ENCODE measurements at regions of chr10 and their contacts with region 1.

Region 1: DNA sequence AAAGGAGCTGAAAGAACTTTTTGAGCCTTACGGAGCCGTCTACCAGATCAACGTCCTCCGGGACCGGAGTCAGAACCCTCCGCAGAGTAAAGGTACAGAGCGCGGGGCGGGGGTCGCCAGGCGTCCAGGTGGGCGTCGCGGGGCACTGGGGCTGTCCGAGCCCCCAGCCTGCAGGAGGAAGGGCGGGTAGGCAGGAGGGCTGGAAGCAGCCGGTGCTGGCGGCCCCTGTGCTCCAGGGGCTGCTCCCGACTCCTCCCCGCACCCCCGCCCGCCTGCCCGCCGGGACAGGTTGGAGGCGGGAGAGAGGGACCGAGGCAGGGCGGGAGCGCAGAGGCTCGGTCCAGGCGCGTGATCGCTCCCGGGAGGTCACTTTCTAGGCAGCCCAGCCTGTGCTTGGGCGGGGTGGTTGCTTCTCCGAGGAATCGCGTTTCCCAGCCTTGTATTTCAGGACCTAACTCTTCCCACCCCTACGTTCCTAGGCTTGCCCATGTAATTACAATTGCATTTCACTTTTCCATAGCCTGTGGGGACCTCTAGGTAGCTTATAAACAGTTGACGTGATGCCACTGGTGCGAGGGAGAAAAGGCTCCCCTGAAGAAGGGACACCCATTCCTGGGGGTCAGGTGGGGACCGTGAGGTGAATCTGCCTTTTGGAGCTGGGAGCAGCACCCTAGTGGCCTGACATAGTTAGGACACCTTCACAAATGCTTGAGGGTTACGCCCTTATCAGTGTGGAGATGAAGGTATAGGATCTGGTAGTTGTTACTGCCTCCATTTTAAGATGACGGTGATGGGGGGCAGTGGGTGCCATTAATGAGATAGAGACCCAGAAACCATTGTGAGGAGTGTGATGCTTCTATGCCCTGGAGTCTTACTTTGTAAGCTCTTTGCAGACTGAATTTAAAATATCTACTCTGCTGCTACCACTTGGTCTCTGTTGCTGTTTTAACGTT is 148.2 kb downstream of the CELF2 start:
- DNase-seq: peak; percentile 70
- H3K4me3 Mint-ChIP-seq: no peak overlapping the region
- H3K27ac Mint-ChIP-seq: peak overlapping the region; percentile 98
- H3K4me1 Mint-ChIP-seq: peaks cover 35% of the 10 kb centered on the region
- H3K27me3 Mint-ChIP-seq: no peaks in the 10 kb centered on the region

Region 2: DNA sequence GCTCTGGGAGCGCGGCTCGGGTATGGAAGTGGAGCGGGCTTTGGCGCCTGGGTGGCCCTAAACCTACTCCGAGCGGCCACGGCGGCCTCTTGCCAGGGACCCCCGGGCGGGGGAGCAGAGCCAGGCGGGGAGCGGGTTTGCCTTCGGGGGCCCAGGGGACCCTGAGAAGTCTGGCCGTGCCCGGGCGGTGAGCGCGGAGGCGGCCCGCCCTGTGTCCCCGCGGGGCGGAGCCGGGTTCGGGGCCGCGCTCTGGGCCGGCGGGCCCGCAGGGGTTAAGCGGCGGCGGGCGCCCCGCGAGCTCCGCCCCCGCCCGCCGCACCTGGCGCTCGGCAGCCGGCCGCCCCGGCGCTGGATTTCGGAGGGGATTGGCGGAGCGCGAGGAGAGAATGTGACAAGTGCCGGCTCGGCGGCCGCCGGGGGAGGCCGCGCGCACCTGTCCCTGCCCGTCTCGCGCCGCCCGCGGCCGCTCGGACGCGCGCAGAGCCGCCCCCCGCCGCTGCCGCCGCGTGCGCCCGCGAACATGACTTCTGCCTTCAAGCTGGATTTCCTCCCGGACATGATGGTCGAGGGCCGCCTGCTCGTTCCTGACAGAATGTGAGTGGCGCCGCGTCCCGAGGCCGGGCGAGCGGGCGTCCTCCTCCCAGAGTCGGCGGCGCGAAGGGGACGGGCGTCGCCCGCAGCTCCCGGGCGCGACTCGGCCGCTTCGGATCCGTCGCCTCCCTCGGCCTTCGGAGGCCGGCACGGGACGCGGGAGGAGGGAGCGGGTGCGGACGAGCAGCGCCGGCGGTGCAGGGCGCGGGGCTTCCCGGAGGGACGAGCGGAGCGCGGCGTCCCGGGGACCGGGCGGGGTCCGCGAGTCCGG is 148.1 kb before region 1 on chr10 and contains the start of gene CELF2:
- intact Hi-C with region 1: loop called (anchors 5 kb)
- DNase-seq: peak; percentile 37
- H3K4me3 Mint-ChIP-seq: peak within 1 kb of the TSS; percentile 71
- H3K27ac Mint-ChIP-seq: peak within 1 kb of the TSS; percentile 6
- H3K4me1 Mint-ChIP-seq: peaks cover 20% of the 10 kb centered on the region
- H3K27me3 Mint-ChIP-seq: peaks cover 83% of the 10 kb centered on the region
- total RNA-seq, gene CELF2: 110 and 111 TPM in 2 replicates

Region 3: DNA sequence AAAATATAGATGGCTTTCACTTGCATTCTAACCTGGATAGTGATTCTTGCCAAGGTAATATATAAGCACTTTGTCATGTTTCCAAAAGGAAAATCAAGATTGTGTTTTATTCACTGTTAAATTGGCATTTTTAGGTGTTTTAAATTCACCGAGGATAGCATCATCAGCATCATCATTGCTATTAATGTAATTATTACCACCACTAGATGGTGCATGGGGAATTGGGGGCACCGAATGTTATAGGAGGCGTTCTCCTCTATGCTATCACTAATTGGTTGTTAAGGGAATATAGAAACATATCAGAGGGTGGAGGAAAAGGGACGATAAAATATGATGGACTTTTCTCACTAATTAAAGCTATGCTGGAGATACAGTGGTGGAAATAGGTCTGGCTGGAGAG is 52.7 kb before region 1 on chr10:
- intact Hi-C with region 1: loop called (anchors 1 kb)
- DNase-seq: no peak
- H3K4me3 Mint-ChIP-seq: no peak overlapping the region
- H3K27ac Mint-ChIP-seq: no peak overlapping the region
- H3K4me1 Mint-ChIP-seq: peaks cover 12% of the 10 kb centered on the region
- H3K27me3 Mint-ChIP-seq: peaks cover 4% of the 10 kb centered on the region

Region 4: GRCh38 chr10:11145495-11145855 is 20.4 kb before region 1 on chr10:
- intact Hi-C with region 1: loop called (anchors 1 kb)
- DNase-seq: peak; percentile 61
- H3K4me3 Mint-ChIP-seq: peak overlapping the region; percentile 82
- H3K27ac Mint-ChIP-seq: peak overlapping the region; percentile 98
- H3K4me1 Mint-ChIP-seq: peaks cover 92% of the 10 kb centered on the region
- H3K27me3 Mint-ChIP-seq: no peaks in the 10 kb centered on the region

Region 5: DNA sequence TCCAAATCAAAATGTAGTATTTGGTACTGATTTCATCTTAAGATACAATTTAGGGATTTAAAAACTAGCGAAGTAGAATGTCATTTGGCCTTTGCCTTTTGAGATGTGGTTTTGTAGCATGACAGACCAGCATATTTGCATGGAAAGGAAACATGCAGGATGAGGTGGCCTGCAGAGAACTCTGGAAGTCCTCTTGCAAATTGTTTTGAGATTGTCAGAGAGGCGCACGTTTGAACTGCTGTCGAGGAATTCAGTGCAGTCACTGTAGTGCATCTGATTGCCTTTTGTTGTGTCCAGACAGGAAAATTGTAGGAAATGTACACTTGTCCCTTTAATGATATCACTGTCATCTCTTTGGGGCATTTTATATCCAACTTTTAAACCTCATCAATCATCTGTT is 11.5 kb before region 1 on chr10:
- intact Hi-C with region 1: loop called (anchors 1 kb)
- DNase-seq: no peak
- H3K4me3 Mint-ChIP-seq: peak overlapping the region; percentile 22
- H3K27ac Mint-ChIP-seq: no peak overlapping the region
- H3K4me1 Mint-ChIP-seq: peaks cover 89% of the 10 kb centered on the region
- H3K27me3 Mint-ChIP-seq: peaks cover 1% of the 10 kb centered on the region

Region 6: GRCh38 chr10:11178606-11179515 is 13.0 kb after region 1 on chr10:
- intact Hi-C with region 1: loop called (anchors 1 kb)
- DNase-seq: peak; percentile 88
- H3K4me3 Mint-ChIP-seq: no peak overlapping the region
- H3K27ac Mint-ChIP-seq: no peak overlapping the region
- H3K4me1 Mint-ChIP-seq: peaks cover 30% of the 10 kb centered on the region
- H3K27me3 Mint-ChIP-seq: no peaks in the 10 kb centered on the region

Region 7: DNA sequence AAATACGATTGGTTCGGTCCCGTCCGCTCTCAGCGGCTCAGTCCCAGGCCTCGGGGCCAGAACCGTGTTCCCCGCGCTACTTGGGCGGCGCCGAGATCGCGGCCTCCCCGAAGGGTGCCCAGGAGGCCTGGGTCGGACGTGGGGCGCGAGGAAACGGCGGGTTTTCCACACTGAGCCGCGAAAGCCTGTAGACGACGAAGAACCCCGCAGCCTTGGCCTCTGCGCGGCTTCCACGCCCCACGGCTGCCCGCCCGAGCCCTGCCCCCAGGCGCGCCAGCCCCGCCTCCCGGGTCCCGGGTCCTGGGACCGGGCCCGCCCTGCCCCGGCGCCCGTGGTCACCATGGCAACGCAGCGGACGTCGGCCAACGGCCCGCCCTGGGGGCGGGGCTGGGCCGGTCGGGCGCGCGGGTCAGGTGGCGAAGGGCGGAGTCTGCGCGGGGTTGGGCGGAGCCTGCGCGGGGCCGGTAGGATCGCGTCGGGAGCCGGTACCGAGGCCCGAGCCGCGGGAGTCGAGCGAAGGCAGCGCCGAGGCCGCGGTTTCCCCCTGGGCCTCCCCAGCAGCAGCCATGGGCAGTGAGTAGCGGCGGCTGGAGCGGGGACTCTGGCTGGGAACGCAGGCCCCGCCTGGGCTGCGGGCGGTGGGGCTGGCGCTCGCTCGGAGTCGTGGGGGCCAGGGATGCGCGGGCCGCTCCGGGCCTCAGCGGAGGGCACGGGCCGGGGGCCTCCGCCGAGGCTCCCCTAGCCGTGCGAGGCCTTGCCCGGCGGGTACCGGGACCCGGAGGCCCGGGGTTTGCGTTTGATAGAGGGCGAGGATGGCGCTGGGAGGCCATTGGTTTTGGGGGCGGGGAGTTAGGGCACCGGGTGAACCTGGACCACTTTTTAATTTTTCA is 963.6 kb after region 1 on chr10 and contains the start of gene SEC61A2:
- intact Hi-C with region 1: loop called (anchors 10 kb)
- DNase-seq: peak; percentile 99
- H3K4me3 Mint-ChIP-seq: peak within 1 kb of the TSS; percentile 94
- H3K27ac Mint-ChIP-seq: peak within 1 kb of the TSS; percentile 90
- H3K4me1 Mint-ChIP-seq: peaks cover 49% of the 10 kb centered on the region
- H3K27me3 Mint-ChIP-seq: no peaks in the 10 kb centered on the region
- total RNA-seq, gene SEC61A2: 21.9 and 22.1 TPM in 2 replicates